ENCODE measurements at regions of chr20 and their contacts with region 1.

Region 1: DNA sequence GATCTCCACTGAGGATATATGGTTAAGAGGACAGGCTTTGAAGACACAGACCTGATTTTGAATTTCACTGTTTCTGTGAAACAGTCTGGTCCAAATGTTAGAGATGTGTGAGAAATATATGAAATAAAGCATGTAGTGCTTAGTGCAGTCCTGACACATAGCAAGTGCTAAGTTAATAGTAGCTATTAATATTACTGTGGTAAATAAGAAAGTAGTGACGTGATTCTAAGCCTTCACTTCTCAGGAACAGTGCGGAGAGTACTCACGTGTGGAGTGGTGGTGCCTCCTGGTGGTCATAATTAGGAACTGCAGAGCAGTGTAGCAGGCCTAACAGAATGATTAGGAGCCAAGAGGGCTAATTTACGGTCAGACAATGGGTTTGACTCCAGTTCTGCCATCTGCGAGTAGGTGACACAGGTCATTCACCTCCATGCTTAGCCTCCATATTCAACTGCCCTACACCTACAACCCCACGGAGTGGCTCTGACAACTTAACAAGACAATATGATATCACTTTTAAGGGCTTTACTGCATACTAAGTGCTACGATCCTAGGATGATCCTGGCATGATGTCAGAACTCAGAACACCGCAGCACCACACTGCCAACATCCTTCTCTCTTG is 106.2 kb downstream of the JPH2 start:
- DNase-seq: peak; percentile 68 to 73
- H3K4me3 ChIP-seq: no peak overlapping the region
- H3K27ac ChIP-seq: no peak overlapping the region
- H3K4me1 ChIP-seq: no peaks in the 10 kb centered on the region
- H3K27me3 ChIP-seq: no peaks in the 10 kb centered on the region
- CTCF ChIP-seq: peak; percentile 93 to 97 (median 97)
- POLR2A ChIP-seq: no peak

Region 2: DNA sequence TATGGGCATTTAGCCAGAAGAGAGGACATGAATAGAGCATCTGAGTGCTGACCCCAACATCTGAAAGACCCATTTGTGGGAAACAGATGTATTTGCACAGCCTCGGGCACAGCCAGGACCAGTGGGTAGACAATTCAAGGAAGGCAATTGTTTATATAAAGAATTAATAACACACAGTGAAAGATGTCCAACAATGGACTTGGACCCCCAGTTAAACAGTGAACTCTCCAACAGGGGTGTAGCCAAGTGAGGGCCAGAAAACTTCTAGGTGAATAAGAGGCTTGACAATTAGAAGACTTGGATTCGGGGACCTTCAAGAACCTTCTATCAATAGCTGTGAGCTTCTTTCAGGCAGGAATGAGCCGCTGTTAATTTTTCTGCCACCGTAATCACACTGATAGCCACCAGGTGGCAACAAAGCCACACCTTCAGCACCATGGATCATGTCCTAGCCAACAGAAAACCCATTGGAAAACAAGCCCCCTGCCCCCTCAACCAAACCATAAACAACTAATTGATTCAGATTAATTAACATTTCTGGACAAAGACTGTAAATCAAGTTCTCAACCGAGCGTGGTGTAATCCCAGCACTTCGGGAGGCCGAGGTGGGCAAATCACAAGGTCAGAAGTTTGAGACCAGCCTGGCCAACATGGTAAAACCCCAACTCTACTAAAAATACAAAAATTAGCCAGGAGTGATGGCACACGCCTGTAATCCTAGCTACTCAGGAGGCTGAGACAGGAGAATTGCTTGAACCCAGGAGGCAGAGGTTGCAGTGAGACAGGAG is 631.8 kb before region 1 on chr20:
- intact Hi-C with region 1: loop called (anchors 5 kb)
- DNase-seq: peak; percentile 25 to 32
- H3K4me3 ChIP-seq: no peak overlapping the region
- H3K27ac ChIP-seq: no peak overlapping the region
- H3K4me1 ChIP-seq: no peaks in the 10 kb centered on the region
- H3K27me3 ChIP-seq: no peaks in the 10 kb centered on the region
- CTCF ChIP-seq: peak; percentile 19 to 64 (median 42)
- POLR2A ChIP-seq: no peak

Region 3: DNA sequence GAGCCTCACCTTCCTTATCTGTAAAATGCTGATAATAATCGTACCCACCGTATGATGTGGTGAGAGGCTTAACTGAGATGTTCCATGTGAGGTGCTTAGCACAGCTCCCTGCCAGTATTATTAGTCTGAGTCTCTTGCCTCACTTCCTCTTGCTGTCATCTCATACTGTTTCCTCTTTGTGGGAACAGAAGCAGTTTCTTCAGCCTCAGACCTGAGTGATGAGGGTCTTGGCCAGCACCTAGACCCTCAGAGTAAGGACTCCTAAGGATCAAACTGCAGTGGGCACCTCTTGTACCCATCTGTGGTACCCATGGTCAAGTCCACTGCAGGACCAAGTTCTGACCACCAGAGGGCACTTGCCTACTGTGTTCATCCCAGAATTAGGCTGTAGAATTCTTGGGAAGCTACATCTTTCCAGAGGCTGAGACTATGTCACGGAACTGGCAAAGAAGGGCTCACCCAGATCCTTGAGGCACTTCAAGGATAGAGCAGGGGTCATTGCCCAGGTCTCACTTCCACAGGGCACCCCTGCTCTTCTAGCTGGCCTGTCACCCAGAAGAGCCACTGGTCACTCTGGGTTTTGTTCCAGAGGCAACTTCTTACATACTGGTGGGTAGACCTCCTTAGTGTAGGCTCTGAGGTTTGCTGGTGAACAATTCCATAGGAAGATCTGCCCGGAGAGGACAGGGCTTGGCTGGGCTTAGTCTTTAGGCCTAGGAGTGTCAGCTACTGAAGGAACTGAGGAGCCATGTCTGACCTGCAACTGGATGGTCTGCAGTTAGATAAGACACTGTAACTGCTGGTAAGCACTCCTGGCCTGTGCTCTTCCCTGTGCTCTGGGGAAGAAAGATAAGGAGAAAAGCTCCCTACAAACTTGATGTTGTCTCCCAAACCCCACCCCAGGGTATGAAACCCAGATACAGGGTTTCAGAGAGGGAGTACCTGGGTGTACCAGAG is 542.6 kb before region 1 on chr20:
- intact Hi-C with region 1: loop called (anchors 10 kb)
- DNase-seq: peak; percentile 50 to 54
- H3K4me3 ChIP-seq: no peak overlapping the region
- H3K27ac ChIP-seq: no peak overlapping the region
- H3K4me1 ChIP-seq: no peaks in the 10 kb centered on the region
- H3K27me3 ChIP-seq: no peaks in the 10 kb centered on the region
- CTCF ChIP-seq: peak; percentile 38 to 91 (median 57)
- POLR2A ChIP-seq: no peak

Region 4: GRCh38 chr20:43749734-43750294 is 330.9 kb before region 1 on chr20:
- intact Hi-C with region 1: loop called (anchors 2 kb)
- DNase-seq: peak; percentile 65 to 71
- H3K4me3 ChIP-seq: no peak overlapping the region
- H3K27ac ChIP-seq: no peak overlapping the region
- H3K4me1 ChIP-seq: no peaks in the 10 kb centered on the region
- H3K27me3 ChIP-seq: no peaks in the 10 kb centered on the region
- CTCF ChIP-seq: peak; percentile 74 to 100 (median 94)
- POLR2A ChIP-seq: no peak

Region 5: DNA sequence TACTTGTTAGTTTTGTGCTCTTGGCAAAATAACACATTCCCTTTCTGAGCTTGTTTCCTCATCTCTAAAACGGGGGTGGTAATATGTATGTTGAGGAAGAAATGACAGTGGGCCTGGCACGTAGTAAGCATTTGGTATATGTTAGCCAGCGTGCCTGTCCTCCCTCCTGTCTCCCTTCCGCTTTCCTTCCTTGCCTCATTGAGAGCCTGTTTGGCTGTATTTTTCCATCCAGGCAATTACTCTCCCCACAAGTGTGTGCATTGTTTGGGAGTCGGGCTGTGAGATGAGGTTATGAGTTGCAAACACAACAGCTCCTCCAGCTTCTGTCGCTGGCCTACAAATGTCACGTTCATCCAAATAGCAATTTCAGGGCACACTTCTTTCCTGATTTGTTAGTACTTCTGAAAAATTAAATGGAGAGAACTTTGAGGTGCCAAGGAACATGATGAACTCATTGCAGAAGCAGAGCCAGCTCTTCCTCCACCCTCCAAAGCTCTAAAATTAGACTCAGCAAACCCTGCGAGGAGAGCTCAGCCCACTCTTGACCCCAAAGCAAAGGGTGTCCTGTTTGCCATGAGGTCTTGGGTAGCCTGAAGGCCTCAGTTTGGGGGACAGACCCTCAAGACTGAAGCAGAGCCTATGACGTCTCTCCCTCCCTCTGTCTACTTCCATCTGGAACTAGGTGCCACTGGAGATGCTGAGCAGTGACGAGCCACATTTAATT is 216.8 kb before region 1 on chr20:
- intact Hi-C with region 1: no loop called
- DNase-seq: no peak
- H3K4me3 ChIP-seq: no peak overlapping the region
- H3K27ac ChIP-seq: no peak overlapping the region
- H3K4me1 ChIP-seq: no peaks in the 10 kb centered on the region
- H3K27me3 ChIP-seq: no peaks in the 10 kb centered on the region
- CTCF ChIP-seq: no peak
- POLR2A ChIP-seq: no peak

Region 6: DNA sequence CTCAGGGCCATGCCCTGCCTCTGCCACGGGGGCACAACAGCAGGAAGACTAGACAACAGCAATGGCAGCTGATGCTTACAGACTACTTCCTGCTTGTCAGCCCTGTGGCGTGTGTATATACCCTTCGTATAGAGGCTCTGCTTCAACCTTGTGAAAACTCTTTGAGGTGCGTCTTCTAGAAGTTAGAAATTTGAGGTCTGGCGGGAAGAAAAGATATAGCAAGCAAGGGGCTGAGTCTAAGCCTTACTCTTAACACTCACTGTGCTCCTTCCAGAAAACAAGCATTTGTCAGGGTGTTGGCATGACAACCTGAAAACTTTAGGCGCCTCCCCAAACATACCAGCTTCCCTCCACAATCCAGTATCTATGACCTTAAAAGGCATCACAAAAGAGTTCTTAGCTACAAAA is 72.9 kb after region 1 on chr20:
- intact Hi-C with region 1: no loop called
- DNase-seq: no peak
- H3K4me3 ChIP-seq: no peak overlapping the region
- H3K27ac ChIP-seq: no peak overlapping the region
- H3K4me1 ChIP-seq: no peaks in the 10 kb centered on the region
- H3K27me3 ChIP-seq: no peaks in the 10 kb centered on the region
- CTCF ChIP-seq: no peak
- POLR2A ChIP-seq: no peak

Measured in thyroid gland (tissue), 4 donors.